Keratinocyte (primary cell): ENCODE measurements at regions of chr20 and their contacts with region 1.

Region 1: DNA sequence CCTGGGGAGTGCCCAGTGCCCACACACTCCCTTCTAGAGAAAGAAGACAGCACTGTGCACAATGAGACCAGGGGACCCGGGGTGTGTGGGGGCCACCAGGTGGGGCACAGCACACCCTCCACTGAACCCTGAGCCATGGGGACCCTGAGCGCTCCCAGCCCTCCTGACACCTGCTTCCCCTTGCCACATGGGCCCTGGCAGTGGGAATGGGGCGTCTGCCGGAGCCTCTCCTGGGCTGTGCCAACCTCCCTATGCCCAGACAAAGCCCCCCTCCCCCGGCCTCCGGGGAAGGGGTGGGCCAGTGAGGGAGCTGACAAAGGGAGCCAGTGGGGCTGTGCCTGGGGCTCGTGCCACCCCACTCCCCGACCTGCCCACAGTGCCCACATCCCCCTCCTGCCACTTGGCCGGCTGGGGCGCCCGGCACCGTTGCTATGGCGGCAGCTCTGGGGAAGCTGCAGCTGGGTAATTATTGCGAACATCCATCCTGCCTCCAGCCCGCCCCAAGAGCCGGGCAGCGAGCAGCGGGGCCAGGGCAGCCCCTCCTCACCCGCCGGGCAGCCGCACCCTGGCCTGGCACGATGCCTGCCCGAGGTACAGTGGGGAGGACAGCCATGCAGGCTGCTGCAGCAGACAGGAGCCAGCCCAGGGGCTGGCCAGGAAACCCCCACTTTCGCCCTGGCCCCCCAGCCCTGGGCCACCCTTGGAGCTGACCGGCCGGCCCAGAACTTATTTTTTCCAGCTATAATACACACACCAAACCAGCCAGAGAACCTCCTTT is 41.9 kb upstream of the NOL4L start:
- DNase-seq: no peak
- H3K4me3 ChIP-seq: no peak overlapping the region
- H3K27ac ChIP-seq: no peak overlapping the region
- H3K4me1 ChIP-seq: peaks cover 14% of the 10 kb centered on the region
- H3K27me3 ChIP-seq: peaks cover 22% of the 10 kb centered on the region
- CTCF ChIP-seq: no peak

Region 2: GRCh38 chr20:32521780-32522525 is 105.1 kb before region 1 on chr20:
- dilution Hi-C with region 1: loop called (anchors 25 kb)
- DNase-seq: no peak
- H3K4me3 ChIP-seq: no peak overlapping the region
- H3K27ac ChIP-seq: no peak overlapping the region
- H3K4me1 ChIP-seq: no peaks in the 10 kb centered on the region
- H3K27me3 ChIP-seq: peaks cover 36% of the 10 kb centered on the region
- CTCF ChIP-seq: peak; percentile 78 to 92 (median 90)

Region 3: GRCh38 chr20:32685541-32686529 is 58.8 kb after region 1 on chr20:
- dilution Hi-C with region 1: no loop called
- DNase-seq: no peak
- H3K4me3 ChIP-seq: no peak overlapping the region
- H3K27ac ChIP-seq: no peak overlapping the region
- H3K4me1 ChIP-seq: peaks cover 14% of the 10 kb centered on the region
- H3K27me3 ChIP-seq: no peaks in the 10 kb centered on the region
- CTCF ChIP-seq: no peak

Region 4: DNA sequence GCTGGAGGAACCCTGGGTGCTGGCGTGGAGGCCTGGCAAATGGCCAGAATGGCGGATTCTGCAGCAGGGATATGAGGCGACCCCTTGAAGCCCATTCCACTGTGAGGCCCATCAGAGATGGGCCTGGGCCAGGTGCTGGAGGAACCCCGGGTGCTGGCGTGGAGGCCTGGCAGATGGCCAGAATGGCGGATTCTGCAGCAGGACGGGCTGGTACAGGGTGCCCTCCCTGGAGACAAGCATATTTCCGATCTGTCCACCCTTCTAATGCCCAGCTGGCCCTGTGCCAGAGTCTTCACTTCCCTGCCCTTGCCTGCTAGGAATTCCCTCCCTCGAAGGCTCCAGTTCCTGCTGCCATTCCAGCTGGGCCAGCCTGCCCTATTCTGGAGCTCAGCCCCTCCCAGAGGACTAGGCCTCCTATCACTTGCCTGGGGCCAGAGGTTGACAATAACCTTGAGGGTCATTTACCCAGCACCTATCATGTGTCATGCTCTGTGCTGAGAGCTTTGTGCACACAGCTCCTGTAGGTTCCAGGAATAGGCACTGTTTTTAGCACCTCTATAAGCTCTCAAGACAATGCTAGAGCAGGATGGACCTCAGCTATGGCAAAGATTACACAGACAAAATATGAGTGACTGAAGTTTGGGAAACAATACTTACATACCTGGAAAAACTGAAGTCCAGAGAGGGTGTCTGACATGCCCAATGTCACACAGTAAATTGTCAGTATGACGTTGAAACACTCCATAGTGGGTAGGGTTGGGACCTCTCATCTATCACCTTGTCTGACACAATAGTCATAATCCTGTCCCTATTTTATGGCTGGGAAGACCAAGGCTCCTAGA is 355.8 kb after region 1 on chr20:
- dilution Hi-C with region 1: no loop called
- DNase-seq: no peak
- H3K4me3 ChIP-seq: no peak overlapping the region
- H3K27ac ChIP-seq: no peak overlapping the region
- H3K4me1 ChIP-seq: no peaks in the 10 kb centered on the region
- H3K27me3 ChIP-seq: no peaks in the 10 kb centered on the region
- CTCF ChIP-seq: no peak